ENCODE measurements at regions of chr9 and their contacts with region 1.

Region 1: GRCh38 chr9:7622481-7622880 is 177.1 kb downstream of the DMAC1 start:
- DNase-seq: no peak
- ATAC-seq: no peak
- H3K4me3 ChIP-seq: no peak overlapping the region
- H3K27ac ChIP-seq: no peak overlapping the region
- H3K4me1 ChIP-seq: no peaks in the 10 kb centered on the region
- H3K27me3 ChIP-seq: no peaks in the 10 kb centered on the region
- CTCF ChIP-seq: no peak
- POLR2A ChIP-seq: no peak

Region 2: DNA sequence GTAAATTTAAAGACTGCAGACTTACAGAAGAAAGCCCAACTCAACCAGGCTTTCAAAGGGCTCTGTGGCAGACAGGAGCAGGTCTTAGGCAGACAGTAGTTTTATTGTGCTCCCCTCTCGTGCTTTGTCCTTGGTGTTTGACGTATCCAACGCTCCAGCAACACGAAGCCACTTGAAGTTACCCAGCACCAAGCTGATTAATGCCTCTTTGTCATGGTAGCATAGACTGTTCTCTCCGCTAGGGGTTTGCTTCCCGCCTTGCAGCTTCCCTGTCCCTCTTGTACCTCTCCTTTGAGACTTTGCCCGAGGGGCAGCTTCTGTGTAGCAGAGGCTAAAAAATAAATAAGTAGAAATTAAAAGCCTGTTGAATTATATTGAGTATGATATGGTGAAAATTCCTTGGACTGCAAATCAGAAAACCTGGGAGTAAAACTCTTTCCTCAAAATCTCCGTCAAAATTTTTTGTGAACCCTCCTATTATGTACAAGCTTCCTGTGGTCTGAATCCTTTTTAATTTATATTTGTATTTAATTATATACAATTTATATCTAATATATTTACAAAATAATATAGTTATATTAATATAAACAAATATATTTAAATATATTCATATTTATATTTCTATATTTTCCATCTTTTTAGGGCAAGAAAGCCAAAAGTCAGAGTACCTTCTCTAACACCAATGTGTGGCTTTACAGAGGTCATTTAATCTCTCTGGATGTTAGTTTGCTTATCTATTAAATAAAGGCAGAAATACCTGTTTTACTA is 228.3 kb before region 1 on chr9:
- intact Hi-C with region 1: no loop called
- DNase-seq: no peak
- ATAC-seq: no peak
- H3K4me3 ChIP-seq: no peak overlapping the region
- H3K27ac ChIP-seq: no peak overlapping the region
- H3K4me1 ChIP-seq: no peaks in the 10 kb centered on the region
- H3K27me3 ChIP-seq: no peaks in the 10 kb centered on the region
- CTCF ChIP-seq: no peak
- POLR2A ChIP-seq: no peak

Region 3: GRCh38 chr9:7560669-7561305 is 61.7 kb before region 1 on chr9:
- intact Hi-C with region 1: loop called (anchors 10 kb)
- DNase-seq: peak in 1 of 4 donors; percentile 9
- ATAC-seq: peak; percentile 79
- H3K4me3 ChIP-seq: no peak overlapping the region
- H3K27ac ChIP-seq: peak overlapping the region in 3 of 4 donors; percentile 1 to 50 (median 48)
- H3K4me1 ChIP-seq: peaks cover 18% of the 10 kb centered on the region
- H3K27me3 ChIP-seq: no peaks in the 10 kb centered on the region
- CTCF ChIP-seq: no peak
- POLR2A ChIP-seq: no peak